Activated CD8-positive, alpha-beta T cell treated with anti-CD3 and anti-CD28 coated beads, Interleukin-2, amount 10 ng/mL, durations not matched to agents 7 days and 5 days (primary cell): ENCODE measurements at regions of chr17 and their contacts with region 1.

Region 1: GRCh38 chr17:8173056-8173870 is 2.9 kb downstream of the TMEM107 start:
- DNase-seq: peak; percentile 90
- ATAC-seq: peak; percentile 79
- H3K4me3 Mint-ChIP-seq: peak overlapping the region; percentile 85
- H3K27ac Mint-ChIP-seq: peak overlapping the region; percentile 99
- H3K4me1 Mint-ChIP-seq: peaks cover 50% of the 10 kb centered on the region
- H3K27me3 Mint-ChIP-seq: no peaks in the 10 kb centered on the region

Region 2: GRCh38 chr17:8012724-8013640 is 160.3 kb before region 1 on chr17:
- CTCF ChIA-PET with region 1: no interaction called
- POLR2A ChIA-PET with region 1: no interaction called
- DNase-seq: no peak
- ATAC-seq: no peak
- H3K4me3 Mint-ChIP-seq: no peak overlapping the region
- H3K27ac Mint-ChIP-seq: no peak overlapping the region
- H3K4me1 Mint-ChIP-seq: peaks cover 16% of the 10 kb centered on the region
- H3K27me3 Mint-ChIP-seq: peaks cover 20% of the 10 kb centered on the region

Region 3: DNA sequence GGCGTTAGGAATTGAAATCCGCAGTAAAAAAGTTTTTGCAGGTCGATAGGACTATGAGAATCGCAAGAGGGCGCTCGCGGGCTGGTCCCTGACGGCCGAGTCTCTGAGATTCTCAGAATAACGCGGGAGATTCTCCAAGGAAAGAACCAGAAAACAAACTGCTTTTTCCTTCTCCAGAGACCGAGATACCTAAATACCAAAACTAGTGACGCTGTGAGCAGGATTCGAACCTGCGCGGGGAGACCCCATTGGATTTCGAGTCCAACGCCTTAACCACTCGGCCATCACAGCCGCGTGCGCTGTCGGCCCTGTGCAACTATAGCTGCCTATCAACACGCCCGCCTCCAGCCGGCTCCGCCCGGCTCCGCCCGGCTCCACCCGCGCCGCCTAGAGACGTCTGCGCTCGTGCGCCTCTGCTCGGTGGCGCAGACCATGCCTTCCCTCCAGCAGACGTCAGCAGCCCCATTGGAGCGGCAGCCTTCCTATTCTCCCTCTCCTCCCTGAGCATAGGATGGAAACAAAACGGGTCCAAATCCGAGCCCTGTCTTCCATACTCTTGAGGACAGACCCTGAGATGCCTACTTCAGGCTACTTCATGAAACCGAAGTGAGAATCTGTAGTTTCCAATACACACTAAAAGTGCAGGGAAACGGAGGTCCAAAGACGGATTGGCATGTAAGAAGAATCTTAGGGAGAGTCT is 34.4 kb before region 1 on chr17:
- CTCF ChIA-PET with region 1: interaction called, 3 read pairs
- POLR2A ChIA-PET with region 1: interaction called, 66 read pairs
- DNase-seq: peak; percentile 98
- ATAC-seq: peak; percentile 93
- H3K4me3 Mint-ChIP-seq: no peak overlapping the region
- H3K27ac Mint-ChIP-seq: no peak overlapping the region
- H3K4me1 Mint-ChIP-seq: peaks cover 5% of the 10 kb centered on the region
- H3K27me3 Mint-ChIP-seq: peaks cover 4% of the 10 kb centered on the region

Region 4: GRCh38 chr17:8156246-8156992 is 16.8 kb before region 1 on chr17:
- CTCF ChIA-PET with region 1: interaction called, 10 read pairs
- POLR2A ChIA-PET with region 1: interaction called, 343 read pairs
- DNase-seq: peak; percentile 100
- ATAC-seq: peak; percentile 82
- H3K4me3 Mint-ChIP-seq: no peak overlapping the region
- H3K27ac Mint-ChIP-seq: no peak overlapping the region
- H3K4me1 Mint-ChIP-seq: peaks cover 36% of the 10 kb centered on the region
- H3K27me3 Mint-ChIP-seq: no peaks in the 10 kb centered on the region

Region 5: DNA sequence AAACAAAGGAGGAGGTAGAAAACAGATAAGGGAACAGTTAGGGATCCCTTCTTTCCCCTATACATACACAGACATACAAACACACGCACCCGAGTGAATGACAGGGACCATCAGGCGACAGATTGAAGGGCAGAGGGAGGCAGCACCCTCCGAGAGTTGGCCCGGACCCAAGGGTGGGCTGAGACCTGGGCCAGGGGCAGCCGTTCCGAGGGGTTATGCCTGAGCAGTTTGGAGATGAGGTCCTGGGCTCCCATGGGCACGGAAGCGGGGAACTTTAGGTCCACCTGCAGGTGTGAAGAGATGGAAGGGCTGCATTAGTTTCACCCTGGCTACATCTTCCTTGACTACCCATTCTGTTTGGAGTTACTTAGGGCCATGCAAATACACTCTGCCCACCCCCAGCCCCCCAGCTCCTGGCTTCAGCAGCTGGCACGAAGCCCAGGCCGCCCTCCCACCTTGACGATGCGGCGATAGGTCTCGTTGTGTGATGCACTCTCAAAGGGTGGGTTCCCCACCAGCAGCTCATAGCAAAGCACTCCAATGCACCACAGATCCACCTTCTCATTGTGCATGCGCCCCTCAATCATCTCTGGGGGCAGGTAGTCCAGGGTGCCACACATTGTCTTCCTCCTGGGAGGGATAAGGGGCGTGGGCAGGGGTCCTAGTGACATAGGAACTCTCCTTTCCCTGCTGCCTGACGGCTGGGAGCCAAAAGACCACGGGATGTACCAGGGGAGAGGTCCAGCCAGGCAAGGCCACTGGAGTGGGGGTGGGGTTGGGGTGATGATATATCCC is 31.7 kb after region 1 on chr17:
- CTCF ChIA-PET with region 1: no interaction called
- POLR2A ChIA-PET with region 1: interaction called, 50 read pairs
- DNase-seq: no peak
- ATAC-seq: no peak
- H3K4me3 Mint-ChIP-seq: no peak overlapping the region
- H3K27ac Mint-ChIP-seq: peak overlapping the region; percentile 58
- H3K4me1 Mint-ChIP-seq: peaks cover 45% of the 10 kb centered on the region
- H3K27me3 Mint-ChIP-seq: no peaks in the 10 kb centered on the region

Region 6: GRCh38 chr17:8248751-8249607 is 75.7 kb after region 1 on chr17 and contains the start of gene PFAS:
- CTCF ChIA-PET with region 1: no interaction called
- POLR2A ChIA-PET with region 1: interaction called, 63 read pairs
- DNase-seq: peak; percentile 97
- ATAC-seq: peak; percentile 71
- H3K4me3 Mint-ChIP-seq: peak within 1 kb of the TSS; percentile 96
- H3K27ac Mint-ChIP-seq: peak within 1 kb of the TSS; percentile 99
- H3K4me1 Mint-ChIP-seq: peaks cover 39% of the 10 kb centered on the region
- H3K27me3 Mint-ChIP-seq: no peaks in the 10 kb centered on the region
- total RNA-seq, gene PFAS: 78.3 to 80.2 TPM

Region 7: DNA sequence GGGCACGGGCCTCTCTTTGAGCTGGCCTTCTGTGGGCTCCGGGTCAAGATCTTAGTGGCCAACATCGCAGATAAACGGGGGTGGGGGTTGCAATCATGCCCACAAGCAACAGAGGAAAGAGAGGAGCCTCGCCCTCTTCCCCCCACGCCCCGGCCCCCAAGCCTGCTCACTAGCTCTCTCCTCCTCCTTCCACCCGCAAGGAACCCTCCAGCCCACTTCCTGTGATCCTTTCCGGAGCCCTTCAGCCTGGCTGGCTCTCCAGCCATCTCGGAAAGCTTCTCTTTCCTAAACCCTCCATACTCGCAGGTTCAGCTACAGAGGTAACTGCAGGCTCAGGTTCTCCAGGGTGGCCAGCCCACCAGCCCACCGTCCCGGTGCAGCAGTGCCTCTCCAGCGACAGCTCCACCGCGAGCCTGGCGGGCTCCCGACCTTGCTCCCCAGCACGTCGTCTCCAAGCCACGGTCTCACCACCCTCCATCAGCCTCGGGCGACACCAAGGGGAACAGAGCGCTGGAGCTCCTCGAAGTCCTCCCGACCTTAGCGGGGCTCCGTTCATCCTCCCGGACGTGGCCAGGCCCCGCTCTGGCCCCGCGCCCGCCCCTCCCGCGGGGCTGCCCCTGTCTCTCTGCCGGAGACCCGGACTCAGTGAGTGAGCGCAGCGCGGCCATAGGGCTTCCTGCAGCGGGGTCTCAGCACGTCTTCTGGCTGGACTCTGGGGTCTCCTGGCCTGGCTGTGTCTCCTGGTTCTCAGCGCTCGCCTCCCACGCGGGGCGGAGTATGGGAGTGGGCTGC is 153.4 kb after region 1 on chr17:
- CTCF ChIA-PET with region 1: no interaction called
- POLR2A ChIA-PET with region 1: no interaction called
- DNase-seq: peak; percentile 44
- ATAC-seq: peak; percentile 85
- H3K4me3 Mint-ChIP-seq: peak overlapping the region; percentile 65
- H3K27ac Mint-ChIP-seq: no peak overlapping the region
- H3K4me1 Mint-ChIP-seq: peaks cover 24% of the 10 kb centered on the region
- H3K27me3 Mint-ChIP-seq: peaks cover 29% of the 10 kb centered on the region